Naive thymus-derived CD4-positive, alpha-beta T cell (primary cell): ENCODE measurements at regions of chr16 and their contacts with region 1.

Region 1: GRCh38 chr16:24539291-24539849 is at the start of gene RBBP6:
- DNase-seq: peak; percentile 90 to 96 (median 95)
- ATAC-seq: peak; percentile 96
- H3K4me3 ChIP-seq: peak within 1 kb of the TSS; percentile 82
- H3K4me3 Mint-ChIP-seq: peak within 1 kb of the TSS; percentile 97 to 100 (median 99)
- H3K27ac ChIP-seq: peak within 1 kb of the TSS; percentile 100
- H3K27ac Mint-ChIP-seq: peak within 1 kb of the TSS; percentile 98 to 100 (median 100)
- H3K4me1 ChIP-seq: peaks cover 20 to 34% of the 10 kb centered on the region in 2 donors
- H3K4me1 Mint-ChIP-seq: peaks cover 22 to 50% (median 34%) of the 10 kb centered on the region in 7 donors
- H3K27me3 ChIP-seq: no peaks in the 10 kb centered on the region
- H3K27me3 Mint-ChIP-seq: peaks cover 0 to 2% (median 0%) of the 10 kb centered on the region in 5 donors
- total RNA-seq, gene RBBP6: 70.5 to 137 (median 106) TPM

Region 2: GRCh38 chr16:23556881-23557778 is 982.2 kb before region 1 on chr16 and contains the starts of genes EARS2 and UBFD1:
- CTCF ChIA-PET with region 1: no interaction called
- POLR2A ChIA-PET with region 1: no interaction called
- intact Hi-C with region 1: loop called in 1 of 2 experiments (anchors 2 kb)
- DNase-seq: peak; percentile 91 to 99 (median 95)
- ATAC-seq: peak; percentile 92
- H3K4me3 ChIP-seq: peak within 1 kb of the TSS; percentile 98
- H3K4me3 Mint-ChIP-seq: peak within 1 kb of the TSS; percentile 92 to 97 (median 93)
- H3K27ac ChIP-seq: peak within 1 kb of the TSS; percentile 85
- H3K27ac Mint-ChIP-seq: peak within 1 kb of the TSS; percentile 85 to 96 (median 94)
- H3K4me1 ChIP-seq: peaks cover 15 to 17% of the 10 kb centered on the region in 2 donors
- H3K4me1 Mint-ChIP-seq: peaks cover 14 to 45% (median 36%) of the 10 kb centered on the region in 7 donors
- H3K27me3 ChIP-seq: no peaks in the 10 kb centered on the region
- H3K27me3 Mint-ChIP-seq: no peaks in the 10 kb centered on the region
- total RNA-seq, gene EARS2: 10.6 to 19.2 (median 15.1) TPM
- total RNA-seq, gene UBFD1: 43.4 to 54.4 (median 51.0) TPM

Region 3: GRCh38 chr16:24367186-24367710 is 172.1 kb before region 1 on chr16:
- CTCF ChIA-PET with region 1: no interaction called
- POLR2A ChIA-PET with region 1: no interaction called
- intact Hi-C with region 1: no loop called
- DNase-seq: no peak
- ATAC-seq: no peak
- H3K4me3 ChIP-seq: no peak overlapping the region
- H3K4me3 Mint-ChIP-seq: no peak overlapping the region
- H3K27ac ChIP-seq: no peak overlapping the region
- H3K27ac Mint-ChIP-seq: no peak overlapping the region
- H3K4me1 ChIP-seq: no peaks in the 10 kb centered on the region
- H3K4me1 Mint-ChIP-seq: no peaks in the 10 kb centered on the region
- H3K27me3 ChIP-seq: no peaks in the 10 kb centered on the region
- H3K27me3 Mint-ChIP-seq: peaks cover 0 to 30% (median 21%) of the 10 kb centered on the region in 5 donors

Region 4: GRCh38 chr16:24516900-24517669 is 22.3 kb before region 1 on chr16:
- CTCF ChIA-PET with region 1: interaction called, 7 read pairs
- POLR2A ChIA-PET with region 1: interaction called, 5 read pairs
- intact Hi-C with region 1: loop called (anchors 1 kb)
- DNase-seq: peak; percentile 46 to 75 (median 68)
- ATAC-seq: peak; percentile 91
- H3K4me3 ChIP-seq: no peak overlapping the region
- H3K4me3 Mint-ChIP-seq: peak overlapping the region in 8 of 10 donors; percentile 14 to 71 (median 44)
- H3K27ac ChIP-seq: no peak overlapping the region
- H3K27ac Mint-ChIP-seq: peak overlapping the region in 3 of 9 donors; percentile 1 to 88 (median 5)
- H3K4me1 ChIP-seq: no peaks in the 10 kb centered on the region
- H3K4me1 Mint-ChIP-seq: peaks cover 4 to 14% (median 6%) of the 10 kb centered on the region in 7 donors
- H3K27me3 ChIP-seq: no peaks in the 10 kb centered on the region
- H3K27me3 Mint-ChIP-seq: peaks cover 0 to 7% (median 0%) of the 10 kb centered on the region in 5 donors

Region 5: GRCh38 chr16:24729362-24729984 is 190.1 kb after region 1 on chr16 and contains the start of gene TNRC6A:
- CTCF ChIA-PET with region 1: no interaction called
- POLR2A ChIA-PET with region 1: interaction called, 8 read pairs
- intact Hi-C with region 1: loop called (anchors 1 kb)
- DNase-seq: peak; percentile 68 to 86 (median 78)
- ATAC-seq: peak; percentile 88
- H3K4me3 ChIP-seq: peak within 1 kb of the TSS; percentile 90
- H3K4me3 Mint-ChIP-seq: peak within 1 kb of the TSS; percentile 89 to 100 (median 96)
- H3K27ac ChIP-seq: peak within 1 kb of the TSS; percentile 98
- H3K27ac Mint-ChIP-seq: peak within 1 kb of the TSS; percentile 93 to 100 (median 98)
- H3K4me1 ChIP-seq: peaks cover 17 to 20% of the 10 kb centered on the region in 2 donors
- H3K4me1 Mint-ChIP-seq: peaks cover 30 to 55% (median 45%) of the 10 kb centered on the region in 7 donors
- H3K27me3 ChIP-seq: no peaks in the 10 kb centered on the region
- H3K27me3 Mint-ChIP-seq: peaks cover 0 to 6% (median 0%) of the 10 kb centered on the region in 5 donors
- total RNA-seq, gene TNRC6A: 46.9 to 110 (median 77.8) TPM

Region 6: GRCh38 chr16:25031441-25032307 is 492.3 kb after region 1 on chr16:
- CTCF ChIA-PET with region 1: no interaction called
- POLR2A ChIA-PET with region 1: no interaction called
- intact Hi-C with region 1: loop called in 1 of 2 experiments (anchors 1 kb)
- DNase-seq: peak; percentile 70 to 95 (median 93)
- ATAC-seq: peak; percentile 100
- H3K4me3 ChIP-seq: peak overlapping the region; percentile 86
- H3K4me3 Mint-ChIP-seq: peak overlapping the region; percentile 84 to 99 (median 96)
- H3K27ac ChIP-seq: peak overlapping the region; percentile 76
- H3K27ac Mint-ChIP-seq: peak overlapping the region; percentile 81 to 98 (median 95)
- H3K4me1 ChIP-seq: peaks cover 13 to 20% of the 10 kb centered on the region in 2 donors
- H3K4me1 Mint-ChIP-seq: peaks cover 24 to 59% (median 36%) of the 10 kb centered on the region in 7 donors
- H3K27me3 ChIP-seq: no peaks in the 10 kb centered on the region
- H3K27me3 Mint-ChIP-seq: no peaks in the 10 kb centered on the region